PC-9 (cell line): ENCODE measurements at regions of chr6 and their contacts with region 1.

Region 1: DNA sequence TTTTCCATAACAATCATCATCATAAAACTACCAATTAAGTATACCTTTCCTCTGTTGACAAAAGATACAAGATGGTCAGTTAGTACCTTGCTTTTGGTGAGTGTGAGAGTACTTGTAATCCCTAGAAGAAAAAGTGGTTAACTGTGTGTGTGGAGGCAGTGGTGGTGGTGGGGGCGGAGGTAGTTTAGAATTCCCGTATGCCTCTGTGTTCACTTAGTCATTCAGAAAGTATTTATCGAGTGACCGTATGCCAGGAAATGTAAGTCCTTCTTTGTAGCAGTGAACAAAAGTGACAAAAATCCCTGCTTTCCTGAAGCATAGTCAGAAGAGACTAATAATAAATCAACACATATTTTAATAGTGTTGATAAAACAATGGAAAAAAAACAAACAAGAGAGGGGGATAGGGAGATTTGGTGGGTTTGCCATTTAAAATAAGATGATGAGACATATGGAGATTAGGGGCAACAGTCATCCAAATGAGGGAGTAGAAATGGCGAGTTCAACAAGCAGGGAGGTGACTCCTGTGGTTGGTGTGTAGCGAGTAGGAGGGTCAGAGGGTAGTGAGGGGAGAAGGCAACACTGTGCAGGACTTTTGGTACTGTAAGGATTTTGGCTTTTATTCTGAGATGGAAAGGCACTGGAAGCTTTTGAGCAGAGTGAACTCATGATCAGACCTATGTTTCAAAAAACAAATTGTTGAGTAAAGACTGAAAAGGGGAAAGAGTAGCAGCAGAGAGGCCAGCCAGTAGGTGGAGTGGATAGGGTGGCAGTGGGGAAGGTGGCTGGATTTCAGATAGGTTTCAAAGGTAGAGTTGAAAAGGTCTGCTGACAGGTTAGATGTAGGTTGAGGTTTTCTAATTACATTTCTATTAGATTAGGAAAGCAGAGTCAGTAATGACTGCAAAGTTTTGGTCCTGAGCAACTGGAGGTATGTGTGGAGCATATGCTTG is 40.3 kb upstream of the SIM1 start:
- DNase-seq: peak in 1 of 2 experiments; percentile 60
- H3K4me3 ChIP-seq: no peak overlapping the region
- H3K27ac ChIP-seq: no peak overlapping the region
- H3K4me1 ChIP-seq: no peaks in the 10 kb centered on the region
- H3K27me3 ChIP-seq: no peaks in the 10 kb centered on the region
- CTCF ChIP-seq: no peak

Region 2: GRCh38 chr6:100573167-100573566 is 68.1 kb after region 1 on chr6:
- CTCF ChIA-PET with region 1: no interaction called
- POLR2A ChIA-PET with region 1: no interaction called
- intact Hi-C with region 1: loop called (anchors 2 kb)
- DNase-seq: no peak
- H3K4me3 ChIP-seq: no peak overlapping the region
- H3K27ac ChIP-seq: no peak overlapping the region
- H3K4me1 ChIP-seq: no peaks in the 10 kb centered on the region
- H3K27me3 ChIP-seq: no peaks in the 10 kb centered on the region
- CTCF ChIP-seq: peak; percentile 53

Region 3: GRCh38 chr6:100664274-100665040 is 159.4 kb after region 1 on chr6:
- CTCF ChIA-PET with region 1: no interaction called
- POLR2A ChIA-PET with region 1: no interaction called
- intact Hi-C with region 1: no loop called
- DNase-seq: no peak
- H3K4me3 ChIP-seq: no peak overlapping the region
- H3K27ac ChIP-seq: peak overlapping the region; percentile 69; the same call in 1 of the 2 replicates
- H3K4me1 ChIP-seq: peaks cover 14% of the 10 kb centered on the region
- H3K27me3 ChIP-seq: no peaks in the 10 kb centered on the region
- CTCF ChIP-seq: peak; percentile 82